ENCODE measurements at regions of chr10 and their contacts with region 1.

Region 1: DNA sequence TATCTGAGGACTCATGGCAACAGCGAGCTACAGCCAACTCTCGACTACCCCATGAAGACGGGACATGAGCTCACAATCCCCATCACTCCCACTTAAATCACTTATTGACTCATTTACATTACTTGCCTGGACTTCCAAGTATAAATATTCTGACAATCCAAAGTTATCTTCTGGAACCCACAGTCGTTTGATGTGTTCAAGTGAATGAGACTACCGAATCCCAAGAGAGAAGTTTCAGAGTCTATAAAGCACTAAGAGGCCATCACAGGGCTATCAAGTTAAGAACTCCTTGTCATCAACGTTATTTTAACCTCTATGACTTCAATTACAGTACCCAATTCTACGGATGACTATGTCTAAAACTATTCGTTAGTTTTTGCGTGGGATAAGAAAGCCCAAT is 11.5 kb upstream of the ANAPC16 start:
- DNase-seq: no peak
- H3K27ac ChIP-seq: no peak overlapping the region
- CTCF ChIP-seq: no peak

Region 2: DNA sequence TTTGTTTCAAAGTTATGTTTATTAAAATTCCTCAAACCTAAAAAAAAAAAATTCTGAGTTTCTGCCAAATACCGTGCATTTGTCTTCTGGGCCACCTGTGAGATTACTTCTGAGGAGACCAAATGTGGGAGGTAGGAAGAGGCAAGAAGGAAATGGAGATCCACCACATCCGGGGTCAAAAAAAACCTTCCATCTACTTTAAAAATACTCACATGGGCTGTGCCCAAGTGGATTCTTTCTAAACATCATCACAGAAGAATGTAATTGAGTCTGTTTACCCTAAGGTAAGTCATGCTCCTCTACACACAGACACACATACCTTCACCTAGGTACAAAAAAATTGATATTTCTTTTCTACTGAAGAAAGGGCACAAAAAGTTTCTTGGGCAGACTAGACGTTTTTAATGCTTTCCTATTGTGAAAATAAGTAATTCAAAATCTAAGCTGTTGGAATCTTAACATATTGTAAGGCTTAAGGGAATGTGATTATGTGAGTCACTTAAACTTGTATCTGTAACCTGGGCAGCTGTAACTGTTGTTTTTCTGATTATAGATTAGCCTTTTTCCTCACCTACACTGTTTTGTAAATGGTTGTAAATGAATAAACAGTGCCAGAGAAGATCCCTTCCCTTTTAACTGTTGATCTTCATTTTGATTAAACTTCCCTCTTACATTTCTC is 96.8 kb before region 1 on chr10:
- CTCF ChIA-PET with region 1: no interaction called
- POLR2A ChIA-PET with region 1: no interaction called
- DNase-seq: peak; percentile 85
- H3K27ac ChIP-seq: no peak overlapping the region
- CTCF ChIP-seq: no peak

Region 3: DNA sequence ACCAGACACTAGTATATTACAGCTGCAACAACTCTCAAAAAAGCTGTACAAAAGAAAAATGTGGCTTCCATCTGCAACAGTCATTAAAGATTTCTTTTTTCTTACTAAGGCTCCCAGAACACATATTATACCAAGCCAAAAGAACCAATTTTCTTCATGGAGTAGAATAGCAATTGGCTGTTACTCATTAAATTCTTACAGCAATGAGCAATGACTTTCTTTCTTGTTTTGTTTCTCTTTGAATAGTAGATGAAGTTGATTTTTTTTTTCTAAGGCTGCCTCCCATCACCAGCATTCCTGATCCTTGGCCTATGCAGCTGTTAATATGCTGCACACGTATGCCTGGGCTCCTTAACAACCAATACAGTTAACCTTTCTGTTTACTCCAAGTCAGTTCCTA is 79.3 kb before region 1 on chr10:
- CTCF ChIA-PET with region 1: no interaction called
- POLR2A ChIA-PET with region 1: no interaction called
- DNase-seq: no peak
- H3K27ac ChIP-seq: no peak overlapping the region
- CTCF ChIP-seq: no peak

Region 4: DNA sequence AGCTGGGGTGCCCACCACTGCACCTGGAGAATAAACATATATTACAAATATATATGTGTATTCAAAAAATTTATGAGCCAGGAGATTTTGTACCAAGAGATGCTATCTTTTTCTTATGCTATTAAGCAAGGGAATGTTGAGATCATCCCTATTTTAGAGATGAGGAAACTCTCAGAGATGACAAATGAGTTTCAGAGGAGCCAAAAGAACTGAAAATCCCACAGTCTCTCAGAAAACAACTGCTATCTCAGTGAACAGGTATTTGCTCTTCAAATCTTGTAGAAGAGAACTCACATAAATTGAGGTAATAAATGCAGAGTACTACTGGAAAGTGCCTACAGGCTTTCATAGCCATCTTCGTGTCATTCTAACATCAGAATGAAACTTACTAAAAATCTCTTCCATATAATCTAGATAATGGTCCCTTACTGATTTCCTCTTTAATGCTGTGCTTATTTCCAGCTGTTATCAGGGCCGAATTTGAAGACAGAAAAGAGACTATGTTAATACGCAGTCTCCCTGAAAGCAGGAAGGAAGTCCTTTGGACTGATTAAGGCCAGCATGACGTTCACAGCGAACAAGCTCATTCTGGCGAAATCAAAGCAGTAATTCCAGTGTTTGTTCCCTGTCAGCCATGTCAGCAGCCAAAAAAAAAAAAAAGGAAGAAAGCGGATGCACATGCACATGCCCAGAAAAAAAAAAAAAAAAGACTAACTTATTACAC is 17.9 kb before region 1 on chr10:
- CTCF ChIA-PET with region 1: interaction called, 4 read pairs
- POLR2A ChIA-PET with region 1: interaction called, 11 read pairs
- DNase-seq: no peak
- H3K27ac ChIP-seq: no peak overlapping the region
- CTCF ChIP-seq: no peak

Region 5: GRCh38 chr10:72229261-72230251 is 25.3 kb after region 1 on chr10:
- CTCF ChIA-PET with region 1: no interaction called
- POLR2A ChIA-PET with region 1: no interaction called
- DNase-seq: no peak
- H3K27ac ChIP-seq: no peak overlapping the region
- CTCF ChIP-seq: no peak

Measured in RWPE1 (cell line).